ENCODE measurements at regions of chr17 and their contacts with region 1.

Region 1: GRCh38 chr17:18248300-18248731 is 10.2 kb downstream of the FLII start:
- DNase-seq: peak; percentile 76
- H3K27ac ChIP-seq: peak overlapping the region; percentile 93
- CTCF ChIP-seq: peak; percentile 79

Region 2: GRCh38 chr17:18070861-18071340 is 177.4 kb before region 1 on chr17:
- CTCF ChIA-PET with region 1: no interaction called
- POLR2A ChIA-PET with region 1: no interaction called
- DNase-seq: no peak
- H3K27ac ChIP-seq: no peak overlapping the region
- CTCF ChIP-seq: no peak

Region 3: DNA sequence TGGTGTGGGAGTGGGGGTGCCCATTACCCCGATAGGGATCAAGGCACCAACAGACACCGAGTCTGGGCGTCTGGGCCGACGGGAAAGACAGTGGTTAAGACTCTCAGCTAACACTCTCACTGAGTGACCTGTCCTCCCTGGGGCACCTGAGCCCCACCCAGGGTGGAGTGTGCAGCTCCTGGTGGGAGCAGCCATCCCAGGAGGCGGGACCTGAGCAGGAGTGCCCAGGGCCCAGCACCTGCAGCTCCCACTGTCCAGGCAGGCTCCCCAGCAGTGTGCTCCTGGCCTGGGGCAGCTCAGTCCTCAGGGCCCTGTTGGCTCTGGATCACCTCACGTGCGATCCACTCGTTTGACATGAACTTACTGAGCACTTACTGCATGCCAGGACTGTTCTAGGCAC is 131.0 kb after region 1 on chr17:
- CTCF ChIA-PET with region 1: interaction called, 10 read pairs
- POLR2A ChIA-PET with region 1: no interaction called
- DNase-seq: no peak
- H3K27ac ChIP-seq: peak overlapping the region; percentile 93
- CTCF ChIP-seq: no peak

Measured in RWPE1 (cell line).